AG04450 (cell line): ENCODE measurements at regions of chr1 and their contacts with region 1.

Region 1: DNA sequence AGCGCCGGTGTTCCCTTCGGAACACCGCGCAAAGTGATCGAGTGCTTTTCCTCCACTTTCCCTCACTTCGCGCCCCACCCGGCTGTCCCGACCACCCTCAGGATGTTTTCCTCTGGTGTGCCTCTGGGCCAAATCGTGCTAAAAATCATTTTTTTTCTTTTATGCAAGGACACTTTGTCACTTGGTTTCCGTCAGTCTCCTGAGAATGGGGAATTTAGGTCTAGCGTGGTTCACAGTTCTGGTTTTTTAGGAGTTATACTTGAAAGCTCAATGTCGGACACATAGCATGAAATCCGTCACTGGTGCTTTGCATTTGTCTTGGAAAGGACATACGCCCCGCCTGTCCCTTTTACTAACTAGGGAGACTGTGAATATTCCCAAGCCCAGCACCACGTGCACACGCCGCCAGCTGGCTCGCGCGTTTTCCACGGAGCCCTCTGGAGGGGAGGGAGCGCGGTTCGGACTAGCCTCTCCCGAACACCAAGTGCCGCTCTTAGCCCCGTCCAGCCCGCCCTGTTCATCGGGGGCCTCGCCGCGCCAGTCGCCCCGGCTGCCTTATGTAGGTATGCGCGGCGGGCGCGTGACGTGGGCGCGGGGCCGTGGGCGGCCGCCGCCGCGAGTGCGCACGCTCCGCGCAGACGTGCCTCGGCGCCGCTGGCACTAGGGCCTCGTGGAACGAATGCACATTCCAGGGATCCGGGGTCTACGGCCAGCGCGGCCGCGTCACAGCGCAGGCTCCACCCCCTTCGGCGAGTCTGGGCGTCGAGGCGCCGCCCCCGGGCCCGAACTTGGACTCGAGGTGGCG is 572 bp upstream of the IRF2BP2 start:
- DNase-seq: peak; percentile 89
- H3K4me3 ChIP-seq: peak overlapping the region; percentile 68
- H3K27ac ChIP-seq: peak overlapping the region; percentile 96
- H3K27me3 ChIP-seq: no peaks in the 10 kb centered on the region
- CTCF ChIP-seq: peak; percentile 16; the same call in 1 of the 2 replicates

Region 2: GRCh38 chr1:234621657-234622335 is 11.2 kb after region 1 on chr1:
- CTCF ChIA-PET with region 1: interaction called, 3 read pairs
- POLR2A ChIA-PET with region 1: interaction called, 10 read pairs
- DNase-seq: no peak
- H3K4me3 ChIP-seq: no peak overlapping the region
- H3K27ac ChIP-seq: peak overlapping the region; percentile 91
- H3K27me3 ChIP-seq: no peaks in the 10 kb centered on the region
- CTCF ChIP-seq: no peak

Region 3: DNA sequence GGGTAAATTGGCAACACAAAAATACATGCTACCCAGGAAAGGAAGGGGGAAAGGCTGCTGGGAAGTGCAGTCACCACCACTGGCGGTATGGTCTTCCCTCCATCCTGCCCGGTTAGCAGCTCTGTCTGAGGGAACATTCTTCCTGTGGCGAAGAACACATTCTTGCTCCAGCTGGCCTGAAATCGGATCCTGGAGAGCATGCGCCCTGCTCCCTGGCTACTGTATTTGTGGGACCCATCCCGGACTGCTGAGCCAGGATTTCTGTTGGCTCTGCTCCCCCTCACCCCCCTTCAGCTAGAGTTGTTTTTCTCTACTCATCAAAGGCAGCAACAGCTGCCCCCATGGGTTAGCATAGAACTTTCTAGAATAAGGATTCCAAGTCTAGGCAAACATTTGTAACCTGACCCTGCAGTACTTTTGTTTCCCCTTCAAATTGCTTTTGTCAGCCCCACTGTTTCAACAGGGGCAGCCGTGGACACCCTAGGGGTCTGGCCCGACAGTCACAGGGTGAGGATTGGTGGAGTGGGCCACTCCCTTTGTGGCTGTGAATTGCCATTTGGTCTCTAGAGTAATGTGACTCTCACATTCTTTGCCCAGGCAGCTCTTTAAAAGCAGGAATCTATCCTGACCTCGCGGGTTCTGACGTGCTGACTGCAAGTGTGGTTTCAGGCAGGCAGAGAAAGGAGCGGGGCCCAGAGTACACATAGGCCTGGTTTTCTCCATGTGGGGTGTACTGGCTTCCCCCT is 360.4 kb after region 1 on chr1:
- CTCF ChIA-PET with region 1: interaction called, 4 read pairs
- POLR2A ChIA-PET with region 1: interaction called, 26 read pairs
- DNase-seq: peak; percentile 97
- H3K4me3 ChIP-seq: peak overlapping the region; percentile 13; the same call in 1 of the 2 replicates
- H3K27ac ChIP-seq: peak overlapping the region; percentile 100
- H3K27me3 ChIP-seq: no peaks in the 10 kb centered on the region
- CTCF ChIP-seq: no peak